Activated naive CD8-positive, alpha-beta T cell treated with anti-CD3 and anti-CD28 coated beads, Interleukin-2, amount 10 ng/mL, durations not matched to agents 7 days and 5 days (primary cell): ENCODE measurements at regions of chr16 and their contacts with region 1.

Region 1: GRCh38 chr16:53435066-53435688 is 906 bp downstream of the RBL2 start:
- DNase-seq: peak; percentile 73
- ATAC-seq: peak; percentile 61
- H3K4me3 Mint-ChIP-seq: peak overlapping the region; percentile 92
- H3K27ac Mint-ChIP-seq: peak overlapping the region; percentile 94
- H3K4me1 Mint-ChIP-seq: peaks cover 27% of the 10 kb centered on the region
- H3K27me3 Mint-ChIP-seq: no peaks in the 10 kb centered on the region

Region 2: DNA sequence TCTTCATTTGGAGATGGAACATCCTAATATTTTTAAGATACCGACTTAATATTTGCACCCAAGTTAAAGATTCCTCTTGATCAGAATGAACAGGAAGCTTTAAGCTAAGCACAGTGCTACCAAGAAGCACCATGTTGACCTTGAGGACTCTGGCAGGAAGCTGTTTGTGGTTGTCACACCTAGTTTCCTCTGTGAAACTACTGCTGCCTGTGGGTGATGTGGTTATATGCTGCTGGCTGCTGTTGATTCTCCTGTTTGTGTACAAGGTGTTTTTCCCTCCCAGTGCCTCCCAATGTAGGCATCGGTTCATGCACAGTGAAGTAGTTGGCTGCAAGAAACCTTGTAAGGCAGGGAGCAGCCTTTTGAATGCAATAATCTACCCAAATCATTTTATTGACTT is 22.5 kb after region 1 on chr16:
- POLR2A ChIA-PET with region 1: interaction called, 183 read pairs
- DNase-seq: peak; percentile 44
- ATAC-seq: peak; percentile 77
- H3K4me3 Mint-ChIP-seq: peak overlapping the region; percentile 84
- H3K27ac Mint-ChIP-seq: peak overlapping the region; percentile 86
- H3K4me1 Mint-ChIP-seq: peaks cover 72% of the 10 kb centered on the region
- H3K27me3 Mint-ChIP-seq: no peaks in the 10 kb centered on the region